ENCODE measurements at regions of chr19 and their contacts with region 1.

Region 1: GRCh38 chr19:19366612-19367396 is 38.7 kb upstream of the GATAD2A start:
- DNase-seq: peak; percentile 85
- H3K4me3 Mint-ChIP-seq: no peak overlapping the region
- H3K27ac Mint-ChIP-seq: no peak overlapping the region
- H3K4me1 Mint-ChIP-seq: peaks cover 9% of the 10 kb centered on the region
- H3K27me3 Mint-ChIP-seq: no peaks in the 10 kb centered on the region
- CTCF ChIP-seq: peak; percentile 83

Region 2: GRCh38 chr19:19285686-19286085 is 81.1 kb before region 1 on chr19:
- CTCF ChIA-PET with region 1: no interaction called
- intact Hi-C with region 1: no loop called
- DNase-seq: no peak
- H3K4me3 Mint-ChIP-seq: no peak overlapping the region
- H3K27ac Mint-ChIP-seq: no peak overlapping the region
- H3K4me1 Mint-ChIP-seq: no peaks in the 10 kb centered on the region
- H3K27me3 Mint-ChIP-seq: no peaks in the 10 kb centered on the region
- CTCF ChIP-seq: no peak

Region 3: GRCh38 chr19:19304186-19304965 is 62.4 kb before region 1 on chr19:
- CTCF ChIA-PET with region 1: no interaction called
- intact Hi-C with region 1: no loop called
- DNase-seq: no peak
- H3K4me3 Mint-ChIP-seq: no peak overlapping the region
- H3K27ac Mint-ChIP-seq: no peak overlapping the region
- H3K4me1 Mint-ChIP-seq: no peaks in the 10 kb centered on the region
- H3K27me3 Mint-ChIP-seq: no peaks in the 10 kb centered on the region
- CTCF ChIP-seq: no peak

Region 4: GRCh38 chr19:19488875-19489690 is 122.3 kb after region 1 on chr19:
- CTCF ChIA-PET with region 1: interaction called, 20 read pairs
- intact Hi-C with region 1: loop called (anchors 1 kb)
- DNase-seq: peak; percentile 76
- H3K4me3 Mint-ChIP-seq: peak overlapping the region; percentile 30
- H3K27ac Mint-ChIP-seq: peak overlapping the region; percentile 88
- H3K4me1 Mint-ChIP-seq: peaks cover 34% of the 10 kb centered on the region
- H3K27me3 Mint-ChIP-seq: no peaks in the 10 kb centered on the region
- CTCF ChIP-seq: no peak

Measured in Calu3 (cell line).